ENCODE measurements at regions of chr13 and their contacts with region 1.

Region 1: DNA sequence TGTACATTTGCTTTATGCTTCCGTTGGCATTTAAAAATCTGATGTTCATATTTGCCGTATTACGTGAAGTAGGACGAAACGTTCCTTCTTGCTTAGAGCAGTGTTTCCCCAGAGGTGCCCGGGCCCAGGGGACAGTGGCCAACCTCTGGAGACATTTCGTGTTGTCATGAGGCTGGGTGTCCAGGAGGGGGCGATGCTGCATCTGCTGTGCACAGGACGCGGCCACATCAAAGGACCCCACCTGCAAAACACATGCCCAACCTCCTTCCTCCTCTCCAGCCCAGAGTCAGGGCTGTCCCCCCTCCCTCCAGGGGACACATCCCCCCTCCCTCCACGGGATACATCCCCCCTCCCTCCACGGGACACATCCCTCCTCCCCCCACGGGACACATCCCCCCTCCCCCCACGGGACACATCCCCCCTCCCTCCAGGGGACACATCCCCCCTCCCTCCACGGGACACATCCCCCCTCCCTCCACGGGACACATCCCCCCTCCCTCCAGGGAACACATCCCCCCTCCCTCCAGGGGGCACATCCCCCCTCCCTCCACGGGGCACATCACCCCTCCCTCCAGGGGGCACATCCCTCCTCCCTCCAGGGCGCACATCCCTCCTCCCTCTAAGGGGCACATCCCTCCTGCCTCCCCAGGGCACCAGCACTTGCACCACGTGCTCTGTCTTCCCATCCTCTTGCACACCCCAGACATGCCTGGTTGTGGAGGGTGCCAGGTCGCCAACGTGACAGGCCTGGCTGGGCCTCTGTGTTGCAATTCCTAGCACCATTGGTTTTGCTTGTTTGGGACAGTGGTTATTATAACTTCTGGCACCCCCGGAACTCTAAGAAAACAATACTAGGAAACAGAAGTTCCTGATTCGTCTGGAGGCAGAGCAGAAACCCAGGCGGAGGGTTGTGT is 46.7 kb downstream of the GAS6 start:
- DNase-seq: peak; percentile 52 to 69 (median 62)
- ATAC-seq: peak; percentile 79
- H3K4me3 ChIP-seq: no peak overlapping the region
- H3K27ac ChIP-seq: no peak overlapping the region
- H3K4me1 ChIP-seq: peaks cover 0 to 48% of the 10 kb centered on the region in 2 experiments; a peak in 2 of 5 replicates
- H3K27me3 ChIP-seq: peaks cover 0 to 11% of the 10 kb centered on the region in 2 experiments; a peak in 2 of 5 replicates
- CTCF ChIP-seq: peak; percentile 64 to 66 (median 65)
- EP300 ChIP-seq: no peak
- POLR2A ChIP-seq: no peak
- RAD21 ChIP-seq: peak; percentile 52 to 79

Region 2: DNA sequence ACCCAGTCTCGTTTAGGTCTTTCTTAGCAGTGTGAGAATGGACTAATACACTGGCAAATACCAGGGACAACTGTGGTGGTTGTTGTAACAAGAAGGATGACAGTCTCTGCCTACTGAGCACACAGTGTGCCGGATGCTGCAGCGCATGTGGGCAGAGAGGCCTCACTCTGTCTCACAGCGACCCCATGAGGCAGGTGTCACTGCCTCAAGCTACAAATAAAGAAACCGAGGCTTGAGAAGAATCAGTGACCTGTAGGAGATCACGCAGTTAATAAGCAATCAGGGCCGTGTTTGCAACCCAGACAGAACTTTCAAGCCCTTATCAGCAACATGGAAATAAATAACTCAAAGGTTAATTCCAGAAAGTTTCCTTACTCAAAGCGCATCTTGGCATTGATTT is 87.2 kb after region 1 on chr13:
- CTCF ChIA-PET with region 1: interaction called, 4 read pairs
- POLR2A ChIA-PET with region 1: interaction called, 3 read pairs
- in situ Hi-C with region 1: no loop called
- intact Hi-C with region 1: loop called (anchors 5 kb)
- DNase-seq: peak in 2 of 4 experiments; percentile 26 to 55
- ATAC-seq: peak; percentile 86
- H3K4me3 ChIP-seq: no peak overlapping the region
- H3K27ac ChIP-seq: no peak overlapping the region
- H3K4me1 ChIP-seq: peaks cover 0 to 2% of the 10 kb centered on the region in 2 experiments; a peak in 1 of 5 replicates
- H3K27me3 ChIP-seq: peaks cover 11 to 52% of the 10 kb centered on the region in 2 experiments; a peak in 4 of 5 replicates
- CTCF ChIP-seq: peak; percentile 57 to 73 (median 63)
- EP300 ChIP-seq: no peak
- POLR2A ChIP-seq: no peak
- RAD21 ChIP-seq: peak; percentile 60 to 80

Region 3: DNA sequence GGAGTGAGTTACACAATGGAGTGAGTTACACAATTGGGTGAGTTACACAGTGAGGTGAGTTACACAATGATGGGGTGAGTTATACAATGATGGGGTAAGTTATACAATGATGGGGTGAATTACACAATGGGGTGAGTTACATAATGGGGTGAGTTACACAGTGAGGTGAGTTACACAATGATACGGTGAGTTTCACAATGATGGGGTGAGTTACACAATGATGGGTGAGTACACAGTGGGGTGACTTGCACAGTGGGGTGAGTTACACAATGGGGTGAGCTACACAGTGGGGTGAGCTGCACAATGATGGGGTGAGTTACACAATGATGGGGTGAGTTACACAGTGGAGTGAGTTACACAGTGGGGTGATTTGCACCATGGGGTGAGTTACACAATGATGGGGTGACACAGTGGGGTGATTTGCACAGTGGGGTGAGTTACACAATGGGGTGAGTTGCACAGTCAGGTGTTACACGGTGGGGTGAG is 99.2 kb after region 1 on chr13:
- CTCF ChIA-PET with region 1: no interaction called
- POLR2A ChIA-PET with region 1: no interaction called
- in situ Hi-C with region 1: loop called (anchors 10 kb)
- intact Hi-C with region 1: no loop called
- DNase-seq: no peak
- ATAC-seq: no peak
- H3K4me3 ChIP-seq: no peak overlapping the region
- H3K27ac ChIP-seq: no peak overlapping the region
- H3K4me1 ChIP-seq: peaks cover 0 to 9% of the 10 kb centered on the region in 2 experiments; a peak in 2 of 5 replicates
- H3K27me3 ChIP-seq: peaks cover 24 to 73% of the 10 kb centered on the region in 2 experiments; a peak in 4 of 5 replicates
- CTCF ChIP-seq: no peak
- EP300 ChIP-seq: no peak
- POLR2A ChIP-seq: no peak
- RAD21 ChIP-seq: no peak

Region 4: DNA sequence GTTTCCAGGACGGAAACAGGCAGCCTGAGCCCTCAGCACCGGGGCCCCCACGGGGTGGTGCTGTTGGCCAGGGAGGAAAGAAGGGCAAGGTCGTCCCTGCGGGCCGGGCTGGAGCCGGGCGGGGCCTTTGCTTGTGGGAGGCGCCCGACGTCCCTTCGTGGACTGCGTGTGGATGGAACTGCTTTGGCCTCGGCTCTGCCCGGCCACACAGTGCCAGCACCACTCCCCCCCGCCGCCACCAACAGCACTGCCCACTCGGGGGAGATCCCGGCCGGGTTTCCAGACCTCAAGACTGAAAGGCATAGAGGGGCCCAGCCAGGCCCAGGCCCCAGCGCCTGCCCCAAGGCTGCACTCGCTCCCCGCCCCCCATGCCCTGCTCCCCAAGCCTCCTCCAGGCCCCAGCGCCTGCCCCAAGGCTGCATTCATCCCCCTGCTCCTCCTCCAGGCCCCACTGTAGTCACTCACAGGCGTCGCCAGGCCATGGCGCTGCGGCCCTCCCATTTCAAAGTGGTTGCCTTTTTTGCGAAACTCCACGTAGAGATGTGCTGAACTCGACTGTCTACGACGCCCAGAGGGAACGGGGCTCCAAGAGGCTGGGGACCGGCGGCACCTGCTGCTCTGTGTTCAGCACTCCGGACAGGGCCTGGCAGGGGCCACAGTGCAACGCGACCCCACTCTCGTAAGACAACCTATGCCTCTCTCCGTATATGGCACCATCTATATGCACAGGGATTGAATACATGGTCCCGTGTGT is 134.2 kb after region 1 on chr13:
- CTCF ChIA-PET with region 1: interaction called, 3 read pairs
- POLR2A ChIA-PET with region 1: no interaction called
- in situ Hi-C with region 1: no loop called
- intact Hi-C with region 1: loop called (anchors 5 kb)
- DNase-seq: peak; percentile 81 to 86 (median 84)
- ATAC-seq: peak; percentile 98
- H3K4me3 ChIP-seq: no peak overlapping the region
- H3K27ac ChIP-seq: no peak overlapping the region
- H3K4me1 ChIP-seq: peaks cover 9 to 41% of the 10 kb centered on the region in 2 experiments; a peak in 4 of 5 replicates
- H3K27me3 ChIP-seq: no peaks in the 10 kb centered on the region
- CTCF ChIP-seq: peak; percentile 82 to 86 (median 83)
- EP300 ChIP-seq: no peak
- POLR2A ChIP-seq: no peak
- RAD21 ChIP-seq: peak; percentile 92 to 93

Region 5: GRCh38 chr13:114043421-114044053 is 226.3 kb after region 1 on chr13:
- CTCF ChIA-PET with region 1: no interaction called
- POLR2A ChIA-PET with region 1: no interaction called
- in situ Hi-C with region 1: no loop called
- intact Hi-C with region 1: no loop called
- DNase-seq: no peak
- ATAC-seq: no peak
- H3K4me3 ChIP-seq: no peak overlapping the region
- H3K27ac ChIP-seq: no peak overlapping the region
- H3K4me1 ChIP-seq: peaks cover 3 to 18% of the 10 kb centered on the region in 2 experiments; a peak in 3 of 5 replicates
- H3K27me3 ChIP-seq: no peaks in the 10 kb centered on the region
- CTCF ChIP-seq: no peak
- EP300 ChIP-seq: no peak
- POLR2A ChIP-seq: no peak
- RAD21 ChIP-seq: no peak

Region 6: GRCh38 chr13:114226699-114227323 is 409.6 kb after region 1 on chr13:
- CTCF ChIA-PET with region 1: no interaction called
- POLR2A ChIA-PET with region 1: no interaction called
- in situ Hi-C with region 1: no loop called
- intact Hi-C with region 1: loop called (anchors 5 kb)
- DNase-seq: peak; percentile 66 to 86 (median 71)
- ATAC-seq: peak; percentile 88
- H3K4me3 ChIP-seq: no peak overlapping the region
- H3K27ac ChIP-seq: no peak overlapping the region
- H3K4me1 ChIP-seq: peaks cover 17 to 23% of the 10 kb centered on the region in 2 experiments; a peak in 4 of 5 replicates
- H3K27me3 ChIP-seq: no peaks in the 10 kb centered on the region
- CTCF ChIP-seq: peak; percentile 88 to 92 (median 90)
- EP300 ChIP-seq: no peak
- POLR2A ChIP-seq: no peak
- RAD21 ChIP-seq: peak; percentile 95